Calu3 (cell line): ENCODE measurements at regions of chrX and their contacts with region 1.

Region 1: GRCh38 chrX:17590892-17591740 is 146.2 kb upstream of the SCML1 start:
- DNase-seq: peak; percentile 71
- H3K4me3 Mint-ChIP-seq: peak overlapping the region; percentile 62
- H3K27ac Mint-ChIP-seq: peak overlapping the region; percentile 95
- H3K4me1 Mint-ChIP-seq: peaks cover 47% of the 10 kb centered on the region
- H3K27me3 Mint-ChIP-seq: no peaks in the 10 kb centered on the region
- CTCF ChIP-seq: peak; percentile 71

Region 2: DNA sequence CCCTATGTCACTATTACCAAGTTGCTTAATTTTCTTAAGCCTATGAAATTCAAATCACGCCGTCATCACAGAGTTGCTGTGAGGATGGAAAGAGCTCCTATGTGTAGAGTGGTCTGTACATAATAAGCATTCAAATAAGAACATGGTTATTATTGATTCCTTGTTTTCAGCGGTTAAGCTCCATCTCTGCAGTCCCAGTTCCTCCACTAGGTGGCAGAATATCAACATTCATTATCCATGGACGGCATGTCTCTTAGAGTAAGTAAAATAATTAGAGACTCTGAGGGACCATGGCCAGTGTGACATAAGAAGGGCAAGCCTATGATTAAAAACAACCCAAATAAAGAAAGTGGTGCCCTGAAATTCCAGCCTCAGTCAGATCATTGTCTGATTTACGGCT is 348.6 kb before region 1 on chrX:
- CTCF ChIA-PET with region 1: interaction called, 23 read pairs
- intact Hi-C with region 1: loop called (anchors 1 kb)
- DNase-seq: peak; percentile 62
- H3K4me3 Mint-ChIP-seq: no peak overlapping the region
- H3K27ac Mint-ChIP-seq: no peak overlapping the region
- H3K4me1 Mint-ChIP-seq: no peaks in the 10 kb centered on the region
- H3K27me3 Mint-ChIP-seq: peaks cover 15% of the 10 kb centered on the region
- CTCF ChIP-seq: peak; percentile 41

Region 3: DNA sequence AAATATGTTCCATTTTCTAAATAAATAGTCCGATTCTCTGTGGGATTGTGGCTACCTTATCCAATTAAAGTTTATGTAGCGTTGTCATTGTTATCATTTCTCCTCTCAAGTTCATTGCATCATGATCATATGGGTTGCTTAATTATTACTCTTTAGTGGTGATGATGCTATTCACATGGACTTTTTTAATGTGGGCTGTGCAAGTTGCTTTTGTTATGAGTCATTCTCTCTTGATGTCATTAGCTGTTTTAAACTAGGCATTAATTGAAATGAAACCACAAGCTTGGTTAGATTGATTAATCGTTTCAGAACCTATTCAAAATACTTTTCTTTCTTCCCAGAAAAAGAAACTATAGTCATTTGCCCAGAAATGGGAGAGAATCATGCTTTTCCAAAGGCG is 177.9 kb before region 1 on chrX:
- CTCF ChIA-PET with region 1: interaction called, 4 read pairs
- intact Hi-C with region 1: loop called (anchors 10 kb)
- DNase-seq: no peak
- H3K4me3 Mint-ChIP-seq: peak overlapping the region; percentile 64
- H3K27ac Mint-ChIP-seq: peak overlapping the region; percentile 95
- H3K4me1 Mint-ChIP-seq: peaks cover 48% of the 10 kb centered on the region
- H3K27me3 Mint-ChIP-seq: no peaks in the 10 kb centered on the region
- CTCF ChIP-seq: no peak

Region 4: GRCh38 chrX:17435466-17435865 is 155.7 kb before region 1 on chrX:
- CTCF ChIA-PET with region 1: no interaction called
- intact Hi-C with region 1: no loop called
- DNase-seq: no peak
- H3K4me3 Mint-ChIP-seq: no peak overlapping the region
- H3K27ac Mint-ChIP-seq: no peak overlapping the region
- H3K4me1 Mint-ChIP-seq: no peaks in the 10 kb centered on the region
- H3K27me3 Mint-ChIP-seq: no peaks in the 10 kb centered on the region
- CTCF ChIP-seq: no peak

Region 5: GRCh38 chrX:17559728-17560379 is 31.3 kb before region 1 on chrX:
- CTCF ChIA-PET with region 1: interaction called, 4 read pairs
- intact Hi-C with region 1: loop called (anchors 2 kb)
- DNase-seq: peak; percentile 53
- H3K4me3 Mint-ChIP-seq: peak overlapping the region; percentile 12
- H3K27ac Mint-ChIP-seq: peak overlapping the region; percentile 73
- H3K4me1 Mint-ChIP-seq: peaks cover 46% of the 10 kb centered on the region
- H3K27me3 Mint-ChIP-seq: no peaks in the 10 kb centered on the region
- CTCF ChIP-seq: no peak

Region 6: DNA sequence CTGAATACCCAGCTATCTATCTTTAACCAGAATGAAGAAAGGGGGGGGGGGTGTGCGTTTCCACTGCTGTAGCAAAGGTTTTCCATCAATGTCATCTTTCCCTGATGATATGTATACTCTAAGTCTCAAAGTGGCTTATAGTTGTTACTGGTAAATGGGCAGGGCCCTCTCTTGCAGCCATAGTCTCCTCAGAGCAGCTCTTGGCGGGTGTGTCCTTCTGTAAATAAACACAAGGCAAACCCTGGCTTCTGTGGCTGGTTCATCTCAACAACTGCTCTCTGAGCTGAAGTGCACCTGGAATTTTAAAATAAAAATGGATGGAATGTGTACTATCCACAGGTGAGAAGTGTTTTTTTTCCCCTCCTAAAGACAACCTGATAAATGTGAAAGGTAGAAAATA is 88.7 kb after region 1 on chrX:
- CTCF ChIA-PET with region 1: interaction called, 12 read pairs
- intact Hi-C with region 1: no loop called
- DNase-seq: no peak
- H3K4me3 Mint-ChIP-seq: peak overlapping the region; percentile 17
- H3K27ac Mint-ChIP-seq: peak overlapping the region; percentile 27
- H3K4me1 Mint-ChIP-seq: peaks cover 44% of the 10 kb centered on the region
- H3K27me3 Mint-ChIP-seq: no peaks in the 10 kb centered on the region
- CTCF ChIP-seq: no peak

Region 7: GRCh38 chrX:17802756-17803155 is 211.6 kb after region 1 on chrX:
- CTCF ChIA-PET with region 1: no interaction called
- intact Hi-C with region 1: no loop called
- DNase-seq: no peak
- H3K4me3 Mint-ChIP-seq: no peak overlapping the region
- H3K27ac Mint-ChIP-seq: no peak overlapping the region
- H3K4me1 Mint-ChIP-seq: no peaks in the 10 kb centered on the region
- H3K27me3 Mint-ChIP-seq: peaks cover 48% of the 10 kb centered on the region
- CTCF ChIP-seq: no peak